AG04450 (cell line): ENCODE measurements at regions of chr14 and their contacts with region 1.

Region 1: DNA sequence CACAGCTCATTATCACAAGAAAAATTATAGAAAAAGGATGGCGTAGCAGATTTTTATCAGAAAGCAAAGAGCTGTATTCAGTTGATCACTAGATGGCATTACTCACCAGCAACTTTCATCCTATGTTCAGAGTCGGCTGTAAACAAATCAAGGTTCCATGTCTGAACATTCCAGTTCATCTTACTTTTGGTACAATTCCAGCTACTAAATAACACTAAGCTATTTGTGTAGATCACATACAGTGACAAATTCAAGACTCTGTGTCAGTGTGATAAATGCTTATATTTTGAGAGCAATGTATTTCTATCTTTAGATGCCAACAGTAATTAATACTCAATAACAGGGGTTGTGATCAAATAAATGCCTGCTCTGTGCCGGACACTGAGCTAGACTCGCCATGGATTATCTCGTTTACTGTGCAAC is 30.1 kb downstream of the NRDE2 start:
- DNase-seq: peak; percentile 41
- H3K4me3 ChIP-seq: no peak overlapping the region
- H3K27ac ChIP-seq: no peak overlapping the region
- H3K27me3 ChIP-seq: no peaks in the 10 kb centered on the region
- CTCF ChIP-seq: peak; percentile 55

Region 2: DNA sequence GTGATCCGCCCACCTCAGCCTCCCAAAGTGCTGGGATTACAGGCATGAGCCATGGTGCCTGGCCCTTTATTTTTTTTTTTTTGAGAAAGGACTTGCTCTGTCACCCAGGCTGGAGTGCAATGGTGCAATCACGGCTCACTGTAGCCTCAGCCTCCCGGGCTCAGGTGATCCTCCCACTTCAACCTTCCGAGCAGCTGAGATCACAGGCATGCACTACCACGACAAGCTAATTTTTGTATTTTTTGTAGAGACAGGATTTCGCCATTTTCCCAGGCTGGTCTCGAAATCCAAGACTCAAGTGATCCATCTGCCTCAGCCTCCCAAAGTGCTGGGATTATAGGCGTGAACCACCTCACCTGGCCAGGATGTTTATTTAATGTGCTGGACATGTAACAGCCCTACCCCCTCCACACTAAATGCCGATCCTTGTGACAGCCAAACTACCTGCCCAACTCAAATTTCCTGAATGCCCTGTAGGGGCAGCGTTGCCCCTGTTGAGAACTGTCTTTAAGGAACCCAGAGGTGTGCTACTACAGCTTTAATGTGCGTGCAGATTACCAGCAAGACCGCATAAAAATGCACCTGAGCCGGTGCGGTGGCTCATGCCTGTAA is 191.9 kb before region 1 on chr14:
- CTCF ChIA-PET with region 1: no interaction called
- POLR2A ChIA-PET with region 1: no interaction called
- DNase-seq: no peak
- H3K4me3 ChIP-seq: no peak overlapping the region
- H3K27ac ChIP-seq: no peak overlapping the region
- H3K27me3 ChIP-seq: peaks cover 3% of the 10 kb centered on the region
- CTCF ChIP-seq: peak; percentile 19

Region 3: GRCh38 chr14:90288651-90289355 is 12.9 kb before region 1 on chr14:
- CTCF ChIA-PET with region 1: interaction called, 17 read pairs
- POLR2A ChIA-PET with region 1: no interaction called
- DNase-seq: no peak
- H3K4me3 ChIP-seq: no peak overlapping the region
- H3K27ac ChIP-seq: no peak overlapping the region
- H3K27me3 ChIP-seq: no peaks in the 10 kb centered on the region
- CTCF ChIP-seq: no peak

Region 4: GRCh38 chr14:90319173-90319572 is 17.5 kb after region 1 on chr14:
- CTCF ChIA-PET with region 1: interaction called, 15 read pairs
- POLR2A ChIA-PET with region 1: no interaction called
- DNase-seq: no peak
- H3K4me3 ChIP-seq: no peak overlapping the region
- H3K27ac ChIP-seq: no peak overlapping the region
- H3K27me3 ChIP-seq: no peaks in the 10 kb centered on the region
- CTCF ChIP-seq: no peak

Region 5: GRCh38 chr14:90342327-90342726 is 40.6 kb after region 1 on chr14:
- CTCF ChIA-PET with region 1: no interaction called
- POLR2A ChIA-PET with region 1: no interaction called
- DNase-seq: no peak
- H3K4me3 ChIP-seq: no peak overlapping the region
- H3K27ac ChIP-seq: no peak overlapping the region
- H3K27me3 ChIP-seq: peaks cover 10% of the 10 kb centered on the region
- CTCF ChIP-seq: no peak